A549 (cell line): ENCODE measurements at regions of chr2 and their contacts with region 1.

Region 1: DNA sequence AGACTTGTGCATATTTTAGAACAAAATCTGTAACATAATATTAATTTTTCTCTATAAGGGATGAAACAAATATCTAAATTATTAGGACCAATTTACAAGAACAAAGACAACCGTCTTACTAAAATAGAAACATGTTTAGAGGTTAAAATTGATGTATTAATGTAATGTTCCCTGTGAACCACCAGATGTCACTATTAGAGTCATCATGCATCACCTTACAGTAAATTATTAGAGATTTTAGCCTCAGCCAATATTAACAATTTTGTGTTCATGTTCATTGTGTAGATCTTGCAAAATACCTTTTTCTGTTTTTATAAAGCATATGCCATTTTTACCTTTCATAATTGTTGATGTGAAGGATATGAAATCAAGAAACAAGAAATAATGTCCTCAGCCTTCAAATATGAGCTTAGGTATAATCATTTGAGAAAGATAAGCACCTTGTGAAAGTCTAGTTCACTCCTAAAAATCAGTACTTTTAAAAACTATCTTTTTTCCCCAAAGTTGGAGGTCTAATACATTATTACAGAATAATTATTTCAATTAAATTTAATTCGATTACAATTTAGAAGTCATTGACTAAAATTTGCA is 344.3 kb upstream of the KCNH7 start:
- DNase-seq: peak; percentile 3 to 17
- ATAC-seq: no peak
- H3K4me3 ChIP-seq: no peak overlapping the region
- H3K27ac ChIP-seq: no peak overlapping the region
- H3K4me1 ChIP-seq: no peaks in the 10 kb centered on the region
- CTCF ChIP-seq: peak; percentile 69
- EP300 ChIP-seq: no peak
- POLR2A ChIP-seq: no peak
- RAD21 ChIP-seq: peak; percentile 73 to 74

Region 2: DNA sequence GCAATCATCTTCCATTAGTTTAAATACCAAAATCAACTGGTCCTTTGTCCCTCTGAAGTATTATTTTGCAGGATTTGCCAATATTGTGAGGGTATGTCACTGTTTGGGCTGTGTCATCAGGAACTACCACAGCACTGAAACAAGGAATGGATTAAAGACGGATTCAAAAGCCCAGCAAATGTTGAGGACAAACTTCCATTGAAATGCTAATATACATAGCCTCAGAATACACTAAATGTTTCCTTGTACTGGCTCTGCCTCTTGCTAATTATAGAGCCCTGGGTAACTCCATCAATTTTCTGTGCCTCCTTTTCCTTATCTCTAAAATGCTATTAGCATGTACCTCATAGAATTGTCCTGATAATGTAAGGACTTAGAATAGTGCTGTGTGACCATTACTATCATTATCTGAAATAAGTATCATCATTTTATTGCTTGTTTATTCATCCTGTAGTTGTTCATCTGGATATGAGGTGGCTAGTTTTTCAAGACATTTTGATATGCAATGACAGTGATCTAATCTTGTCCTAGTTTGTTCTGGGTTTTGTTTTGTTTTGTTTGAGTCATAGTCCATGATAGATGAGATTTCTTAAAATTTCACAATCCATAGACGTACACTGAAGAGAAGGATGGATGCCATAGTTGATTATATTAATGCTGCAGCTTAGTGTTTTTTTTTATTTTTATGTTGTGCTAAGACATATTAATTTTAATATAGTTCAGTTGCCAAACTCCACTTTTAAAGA is 10.9 kb before region 1 on chr2:
- CTCF ChIA-PET with region 1: interaction called, 16 read pairs
- POLR2A ChIA-PET with region 1: no interaction called
- DNase-seq: peak in 1 of 2 experiments; percentile 51
- ATAC-seq: peak; percentile 78 to 92
- H3K4me3 ChIP-seq: no peak overlapping the region
- H3K27ac ChIP-seq: peak overlapping the region; percentile 34 to 54; a peak in 4 of 6 replicates
- H3K4me1 ChIP-seq: peaks cover 32% of the 10 kb centered on the region
- CTCF ChIP-seq: no peak
- EP300 ChIP-seq: no peak
- POLR2A ChIP-seq: no peak
- RAD21 ChIP-seq: no peak

Region 3: GRCh38 chr2:163198972-163199371 is 16.1 kb after region 1 on chr2:
- CTCF ChIA-PET with region 1: interaction called, 14 read pairs
- POLR2A ChIA-PET with region 1: no interaction called
- DNase-seq: no peak
- ATAC-seq: no peak
- H3K4me3 ChIP-seq: no peak overlapping the region
- H3K27ac ChIP-seq: no peak overlapping the region
- H3K4me1 ChIP-seq: no peaks in the 10 kb centered on the region
- CTCF ChIP-seq: no peak
- EP300 ChIP-seq: no peak
- POLR2A ChIP-seq: no peak
- RAD21 ChIP-seq: no peak

Region 4: GRCh38 chr2:163345908-163346573 is 163.2 kb after region 1 on chr2:
- CTCF ChIA-PET with region 1: no interaction called
- POLR2A ChIA-PET with region 1: no interaction called
- DNase-seq: peak; percentile 26 to 76
- ATAC-seq: no peak
- H3K4me3 ChIP-seq: no peak overlapping the region
- H3K27ac ChIP-seq: peak overlapping the region; percentile 58 to 79; a peak in 5 of 6 replicates
- H3K4me1 ChIP-seq: peaks cover 39% of the 10 kb centered on the region
- CTCF ChIP-seq: peak; percentile 81
- EP300 ChIP-seq: no peak
- POLR2A ChIP-seq: no peak
- RAD21 ChIP-seq: peak; percentile 85 to 90

Region 5: DNA sequence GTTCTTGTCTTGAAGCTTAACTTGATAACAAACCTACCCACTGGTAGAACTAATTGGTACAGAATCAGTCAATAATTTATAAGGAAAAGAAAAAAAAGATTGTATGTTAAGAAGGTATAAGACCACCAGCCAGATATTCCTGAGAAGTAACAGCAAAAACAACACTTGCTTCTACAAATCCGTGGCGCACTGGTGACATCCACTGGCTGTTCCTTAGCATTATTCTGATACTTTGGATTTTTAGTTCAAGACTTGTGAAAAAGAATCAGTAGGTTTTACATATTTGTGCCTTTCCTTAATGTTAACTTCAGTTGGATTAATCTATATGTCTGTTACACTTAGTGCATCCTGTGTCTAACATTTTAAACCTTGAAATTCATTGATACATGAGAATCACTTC is 1296.6 kb after region 1 on chr2:
- CTCF ChIA-PET with region 1: interaction called, 16 read pairs
- POLR2A ChIA-PET with region 1: interaction called, 3 read pairs
- DNase-seq: peak in 1 of 2 experiments; percentile 64
- ATAC-seq: peak; percentile 56 to 72; a peak in 5 of 6 replicates
- H3K4me3 ChIP-seq: no peak overlapping the region
- H3K27ac ChIP-seq: no peak overlapping the region
- H3K4me1 ChIP-seq: no peaks in the 10 kb centered on the region; the same call in 2 of the 3 replicates
- CTCF ChIP-seq: peak; percentile 85
- EP300 ChIP-seq: no peak
- POLR2A ChIP-seq: no peak
- RAD21 ChIP-seq: peak; percentile 88 to 89

Region 6: DNA sequence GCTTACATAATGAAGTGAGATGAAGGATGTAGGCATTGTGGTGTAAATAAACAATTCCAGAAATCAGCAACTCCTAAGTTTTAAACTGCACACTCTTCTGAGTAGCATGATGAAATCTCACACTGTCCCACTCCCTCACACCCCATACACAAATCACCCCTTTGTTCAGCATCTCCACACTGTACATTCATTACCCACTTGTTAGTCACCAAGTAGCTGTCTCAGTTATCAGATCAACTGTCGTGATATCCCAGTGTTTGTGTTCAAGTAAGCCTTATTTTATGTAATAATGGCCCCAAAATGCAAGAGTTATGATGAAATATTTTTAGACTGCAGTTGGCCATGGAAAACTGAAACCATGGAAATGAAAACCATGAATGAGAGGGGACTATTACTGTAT is 1302.7 kb after region 1 on chr2:
- CTCF ChIA-PET with region 1: interaction called, 11 read pairs
- POLR2A ChIA-PET with region 1: interaction called, 3 read pairs
- DNase-seq: no peak
- ATAC-seq: no peak
- H3K4me3 ChIP-seq: no peak overlapping the region
- H3K27ac ChIP-seq: no peak overlapping the region
- H3K4me1 ChIP-seq: no peaks in the 10 kb centered on the region
- CTCF ChIP-seq: no peak
- EP300 ChIP-seq: no peak
- POLR2A ChIP-seq: no peak
- RAD21 ChIP-seq: no peak